AG04449 (cell line): ENCODE measurements at regions of chr17 and their contacts with region 1.

Region 1: DNA sequence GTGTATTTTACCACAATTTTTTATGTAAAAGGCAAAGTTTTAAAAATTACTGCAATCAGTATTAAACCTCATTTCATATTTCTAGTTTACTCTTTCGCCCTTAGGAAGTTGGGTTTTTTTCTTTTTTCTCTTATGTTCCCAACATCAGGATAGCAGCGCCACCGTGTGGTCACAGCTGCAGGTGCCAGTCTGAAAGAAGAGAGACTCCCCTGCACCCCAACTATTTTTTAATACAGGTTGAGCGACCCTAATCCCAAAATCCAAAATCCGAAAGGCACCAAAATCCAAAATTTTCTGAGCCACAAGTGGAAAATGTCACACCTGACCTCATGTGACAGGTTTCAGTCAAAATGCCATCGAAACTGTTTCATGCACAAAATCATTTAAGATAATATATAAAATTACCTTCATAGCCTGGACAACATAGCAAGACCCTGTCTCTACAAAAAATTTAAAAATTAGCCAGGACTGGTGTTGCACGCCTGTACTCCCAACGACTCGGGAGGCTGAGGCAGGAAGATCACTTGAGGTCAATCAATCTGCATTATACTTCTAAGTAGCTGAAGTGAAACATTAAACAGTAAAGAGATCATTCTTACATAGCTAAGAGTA is 21.8 kb upstream of the ASGR2 start:
- DNase-seq: peak; percentile 4
- H3K4me3 ChIP-seq: no peak overlapping the region
- CTCF ChIP-seq: peak; percentile 72

Region 2: GRCh38 chr17:6627019-6627418 is 509.4 kb before region 1 on chr17:
- CTCF ChIA-PET with region 1: no interaction called
- POLR2A ChIA-PET with region 1: no interaction called
- DNase-seq: no peak
- H3K4me3 ChIP-seq: no peak overlapping the region
- CTCF ChIP-seq: no peak

Region 3: DNA sequence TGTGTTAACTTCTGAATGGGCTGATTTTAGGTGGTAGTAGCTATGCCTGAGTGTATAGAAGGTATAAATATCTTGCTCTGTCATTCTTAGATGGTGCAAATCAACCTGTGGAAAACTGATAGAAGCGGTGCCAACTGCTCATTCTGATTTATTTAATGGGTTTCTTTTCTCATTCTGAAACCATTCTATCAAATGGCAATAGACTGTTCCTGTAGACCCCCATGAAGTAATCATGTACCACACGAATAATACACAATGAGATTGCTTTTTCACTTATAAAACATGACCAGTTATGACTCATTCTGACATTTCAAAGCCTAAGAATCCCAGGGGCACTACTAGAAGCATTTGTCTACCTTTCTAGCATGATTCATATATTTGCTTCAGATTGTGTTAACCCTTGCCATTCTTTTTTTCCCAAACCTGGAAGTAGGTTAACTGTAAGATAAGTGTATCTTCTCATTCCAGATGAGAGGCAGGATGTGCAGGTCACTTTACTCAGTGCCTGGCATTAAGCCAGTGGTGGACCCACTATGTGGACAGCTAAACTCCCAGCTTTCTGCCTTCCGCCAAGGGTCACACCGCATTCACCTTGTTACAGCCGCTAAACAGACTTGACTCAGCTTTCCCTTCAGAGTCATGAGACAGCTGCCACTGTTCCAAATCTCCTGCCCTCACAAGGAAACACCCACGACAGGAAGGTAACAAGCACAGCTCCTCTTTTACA is 76.0 kb before region 1 on chr17:
- CTCF ChIA-PET with region 1: interaction called, 465 read pairs
- POLR2A ChIA-PET with region 1: no interaction called
- DNase-seq: no peak
- H3K4me3 ChIP-seq: no peak overlapping the region
- CTCF ChIP-seq: no peak

Region 4: GRCh38 chr17:7147772-7148171 is 11.4 kb after region 1 on chr17:
- CTCF ChIA-PET with region 1: interaction called, 73 read pairs
- POLR2A ChIA-PET with region 1: no interaction called
- DNase-seq: no peak
- H3K4me3 ChIP-seq: no peak overlapping the region
- CTCF ChIP-seq: no peak